Calu3 (cell line): ENCODE measurements at regions of chr1 and their contacts with region 1.

Region 1: GRCh38 chr1:207499573-207499972 is 3.6 kb downstream of the CR1 start:
- DNase-seq: peak; percentile 71
- H3K4me3 Mint-ChIP-seq: no peak overlapping the region
- H3K27ac Mint-ChIP-seq: no peak overlapping the region
- H3K4me1 Mint-ChIP-seq: peaks cover 5% of the 10 kb centered on the region
- H3K27me3 Mint-ChIP-seq: peaks cover 50% of the 10 kb centered on the region
- CTCF ChIP-seq: peak; percentile 74

Region 2: DNA sequence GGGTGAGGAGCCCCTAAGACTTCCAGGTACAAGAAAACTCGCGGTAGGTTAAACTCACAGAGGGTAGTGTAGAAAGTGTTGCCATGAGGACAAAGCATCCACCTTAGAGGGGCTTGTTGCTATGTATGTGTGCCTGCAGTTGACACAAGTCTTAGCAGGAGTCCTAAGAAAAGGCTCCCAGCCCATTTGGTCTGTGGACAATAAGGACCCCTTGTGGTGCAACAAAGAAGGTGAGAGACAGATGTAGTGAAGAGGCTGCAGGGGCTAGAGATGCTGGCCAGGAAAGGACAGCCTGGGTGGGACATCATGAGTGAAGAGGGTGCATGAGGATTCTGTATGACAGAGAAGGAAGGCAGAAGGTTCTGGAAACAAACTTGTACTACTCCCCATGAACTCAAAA is 691.0 kb before region 1 on chr1:
- CTCF ChIA-PET with region 1: interaction called, 4 read pairs
- intact Hi-C with region 1: loop called (anchors 2 kb)
- DNase-seq: peak; percentile 21
- H3K4me3 Mint-ChIP-seq: no peak overlapping the region
- H3K27ac Mint-ChIP-seq: no peak overlapping the region
- H3K4me1 Mint-ChIP-seq: no peaks in the 10 kb centered on the region
- H3K27me3 Mint-ChIP-seq: peaks cover 97% of the 10 kb centered on the region
- CTCF ChIP-seq: no peak

Region 3: DNA sequence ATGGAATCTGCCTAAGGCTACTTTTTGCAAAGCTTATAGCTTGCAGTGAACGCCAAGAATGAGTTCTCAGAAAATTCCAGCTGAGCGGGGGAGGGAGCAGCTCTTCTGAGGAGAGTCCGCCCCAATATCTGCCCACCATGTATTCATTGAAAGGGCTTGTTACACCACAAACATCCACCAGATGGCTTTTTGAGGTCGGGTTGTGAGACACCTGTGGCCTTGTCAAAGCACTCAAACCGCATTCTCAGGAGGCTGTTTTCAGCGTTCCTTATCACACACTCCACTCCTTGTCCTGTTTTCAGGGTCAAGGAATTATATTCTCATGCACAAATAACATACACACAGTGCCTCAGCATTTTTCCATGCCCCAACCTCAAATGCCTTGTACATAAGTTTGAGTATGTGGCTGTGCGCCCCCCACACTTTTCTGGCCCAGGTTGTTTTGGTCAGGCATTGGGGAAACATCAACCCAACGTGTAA is 414.8 kb before region 1 on chr1:
- CTCF ChIA-PET with region 1: interaction called, 15 read pairs
- intact Hi-C with region 1: loop called (anchors 1 kb)
- DNase-seq: peak; percentile 76
- H3K4me3 Mint-ChIP-seq: no peak overlapping the region
- H3K27ac Mint-ChIP-seq: no peak overlapping the region
- H3K4me1 Mint-ChIP-seq: peaks cover 38% of the 10 kb centered on the region
- H3K27me3 Mint-ChIP-seq: no peaks in the 10 kb centered on the region
- CTCF ChIP-seq: peak; percentile 79

Region 4: DNA sequence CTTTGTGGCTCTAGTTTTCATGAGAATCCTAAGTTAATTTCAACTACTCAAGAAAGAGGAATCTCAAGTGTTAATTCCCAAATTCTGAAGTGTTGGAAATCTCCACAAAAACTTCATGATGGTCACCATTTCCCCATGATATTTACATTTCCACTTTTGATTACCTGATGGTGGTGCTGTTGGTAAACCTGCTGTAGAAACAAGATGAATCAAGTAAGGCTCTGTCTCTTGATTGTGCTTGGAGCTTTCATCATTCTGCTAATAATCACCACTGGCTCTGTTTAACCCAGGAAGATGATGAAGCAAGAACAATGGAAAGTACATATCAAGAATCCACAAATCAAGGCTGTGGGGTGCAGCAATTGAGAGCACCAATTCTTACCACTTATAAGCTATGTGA is 317.7 kb before region 1 on chr1:
- CTCF ChIA-PET with region 1: interaction called, 3 read pairs
- intact Hi-C with region 1: loop called (anchors 1 kb)
- DNase-seq: no peak
- H3K4me3 Mint-ChIP-seq: no peak overlapping the region
- H3K27ac Mint-ChIP-seq: no peak overlapping the region
- H3K4me1 Mint-ChIP-seq: peaks cover 5% of the 10 kb centered on the region
- H3K27me3 Mint-ChIP-seq: no peaks in the 10 kb centered on the region
- CTCF ChIP-seq: no peak